AG04449 (cell line): ENCODE measurements at regions of chr10 and their contacts with region 1.

Region 1: GRCh38 chr10:92087750-92088395 is 164.3 kb downstream of the BTAF1 start:
- DNase-seq: no peak
- H3K4me3 ChIP-seq: no peak overlapping the region
- CTCF ChIP-seq: peak; percentile 74

Region 2: DNA sequence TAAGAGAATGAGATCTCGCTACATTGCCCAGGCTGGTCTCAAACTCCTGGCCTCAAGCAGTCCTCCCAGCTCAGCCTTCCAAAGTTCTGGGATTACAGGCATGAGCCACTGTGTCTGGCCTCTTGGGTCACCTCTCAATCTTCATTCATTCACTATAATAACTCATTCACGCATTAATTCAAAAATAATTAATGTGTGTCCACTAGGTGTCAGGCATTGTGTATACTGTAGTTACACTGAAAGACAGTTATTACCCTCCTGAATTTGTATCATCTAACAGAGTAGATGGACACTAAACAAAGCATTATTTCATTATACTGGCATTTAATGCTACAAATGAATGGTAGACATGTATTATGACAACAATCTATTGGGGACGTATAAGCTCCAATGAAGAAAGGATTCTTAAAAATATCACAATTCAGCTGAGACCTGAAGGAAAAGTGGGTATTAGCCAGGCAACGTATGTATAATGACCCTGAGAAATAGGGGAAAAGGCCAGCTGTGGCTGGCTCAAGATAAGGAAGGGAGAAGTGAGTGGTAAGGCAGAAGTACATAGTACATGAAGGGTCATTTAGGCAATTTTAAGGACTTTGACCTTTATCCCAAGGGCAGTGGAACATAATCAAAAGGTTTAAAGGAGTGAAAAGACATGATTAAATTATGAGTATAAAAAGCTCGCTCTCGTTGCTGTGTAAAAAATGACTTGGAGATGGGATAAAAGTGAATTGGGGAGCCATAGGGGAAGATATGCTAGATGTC is 13.6 kb before region 1 on chr10:
- CTCF ChIA-PET with region 1: interaction called, 20 read pairs
- POLR2A ChIA-PET with region 1: no interaction called
- DNase-seq: no peak
- H3K4me3 ChIP-seq: no peak overlapping the region
- CTCF ChIP-seq: no peak

Region 3: DNA sequence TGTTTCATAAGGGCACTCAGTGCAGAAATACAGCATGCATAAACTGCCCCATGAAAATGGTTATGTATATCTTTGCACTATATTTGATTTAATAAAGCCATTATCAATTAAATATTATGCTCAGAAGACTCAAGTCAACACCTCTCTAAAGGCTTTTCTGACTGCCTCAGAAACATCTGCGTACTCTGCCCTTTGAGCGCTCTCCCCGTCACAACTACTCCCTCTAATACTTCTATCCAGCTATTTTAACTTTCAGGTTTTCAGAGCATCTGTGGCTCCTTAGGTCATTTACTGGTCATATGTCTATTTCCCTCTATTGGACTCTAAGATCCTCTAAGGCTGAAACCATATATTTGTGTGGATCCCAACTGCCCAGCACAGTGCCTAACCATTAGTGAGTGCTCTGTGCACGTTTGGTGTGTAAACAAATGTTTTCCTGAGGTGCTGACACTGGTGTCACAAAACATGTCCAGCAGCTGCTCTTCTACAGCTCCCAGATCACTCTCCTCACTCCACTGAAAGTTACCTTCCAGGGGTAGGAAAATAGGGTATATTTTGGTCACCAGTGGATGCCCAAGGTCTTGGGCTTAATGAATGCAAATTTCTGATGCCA is 14.8 kb after region 1 on chr10:
- CTCF ChIA-PET with region 1: interaction called, 10 read pairs
- POLR2A ChIA-PET with region 1: interaction called, 4 read pairs
- DNase-seq: no peak
- H3K4me3 ChIP-seq: no peak overlapping the region
- CTCF ChIP-seq: no peak

Region 4: GRCh38 chr10:92110039-92110794 is 22.3 kb after region 1 on chr10:
- CTCF ChIA-PET with region 1: interaction called, 10 read pairs
- POLR2A ChIA-PET with region 1: no interaction called
- DNase-seq: no peak
- H3K4me3 ChIP-seq: no peak overlapping the region
- CTCF ChIP-seq: no peak

Region 5: DNA sequence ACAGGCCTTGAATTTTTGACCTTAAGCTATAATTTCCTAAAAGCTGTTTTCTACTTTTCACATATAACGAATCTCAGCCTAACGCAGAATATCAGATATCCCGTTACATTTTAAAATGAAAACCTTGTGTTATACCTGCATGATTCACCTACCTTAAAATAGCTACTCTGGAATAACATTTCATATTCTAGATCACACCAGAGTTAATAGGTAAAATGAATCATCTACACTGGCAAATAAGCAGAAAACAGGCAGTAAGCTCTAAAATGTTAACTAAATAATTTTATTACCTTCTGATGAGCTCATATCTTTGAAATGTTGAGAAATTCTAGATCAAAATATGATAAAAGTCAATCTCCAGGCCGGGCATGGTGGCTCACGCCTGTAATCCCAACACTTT is 131.6 kb after region 1 on chr10:
- CTCF ChIA-PET with region 1: no interaction called
- POLR2A ChIA-PET with region 1: no interaction called
- DNase-seq: no peak
- H3K4me3 ChIP-seq: no peak overlapping the region
- CTCF ChIP-seq: no peak

Region 6: GRCh38 chr10:92290837-92291615 is 203.2 kb after region 1 on chr10 and contains the starts of genes CPEB3 and MARCHF5:
- CTCF ChIA-PET with region 1: interaction called, 103 read pairs
- POLR2A ChIA-PET with region 1: no interaction called
- DNase-seq: peak; percentile 67
- H3K4me3 ChIP-seq: peak within 1 kb of the TSS; percentile 97
- CTCF ChIP-seq: peak; percentile 76

Region 7: GRCh38 chr10:92432596-92432995 is 344.7 kb after region 1 on chr10:
- CTCF ChIA-PET with region 1: interaction called, 78 read pairs
- POLR2A ChIA-PET with region 1: no interaction called
- DNase-seq: no peak
- H3K4me3 ChIP-seq: no peak overlapping the region
- CTCF ChIP-seq: no peak